GM10248 (cell line): ENCODE measurements at regions of chr7 and their contacts with region 1.

Region 1: GRCh38 chr7:6589829-6590644 is at the start of gene INTS15:
- DNase-seq: peak; percentile 92
- CTCF ChIP-seq: peak; percentile 88

Region 2: GRCh38 chr7:6074612-6075385 is 515.2 kb before region 1 on chr7:
- CTCF ChIA-PET with region 1: no interaction called
- POLR2A ChIA-PET with region 1: no interaction called
- DNase-seq: no peak
- CTCF ChIP-seq: no peak

Region 3: DNA sequence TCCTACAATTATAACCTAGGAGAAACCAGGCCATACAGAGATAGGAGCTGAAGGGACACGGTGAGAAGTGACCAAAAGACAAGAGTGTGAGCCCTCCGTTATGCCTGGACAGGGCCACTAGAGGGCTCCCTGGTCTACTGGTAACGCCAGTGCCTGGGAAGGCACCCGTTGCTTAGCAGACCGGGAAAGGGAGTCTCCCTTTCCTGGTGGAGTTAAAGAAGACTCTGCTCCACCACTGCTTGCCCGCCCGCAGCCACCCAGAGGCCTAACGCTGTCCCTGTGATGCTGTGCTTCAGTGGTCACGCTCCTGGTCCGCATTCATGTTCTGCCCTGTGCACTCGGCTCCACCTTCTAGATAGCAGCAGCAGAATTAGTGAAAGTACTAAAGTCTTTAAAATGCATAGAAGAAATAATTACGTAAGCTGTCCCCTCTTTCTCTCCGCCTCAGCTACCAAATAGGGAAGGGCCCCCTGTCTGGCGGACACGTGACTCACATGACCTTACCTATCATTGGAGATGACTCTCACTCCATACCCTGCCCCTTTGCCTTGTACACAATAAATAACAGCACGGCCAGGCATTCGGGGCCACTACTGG is 73.6 kb before region 1 on chr7:
- CTCF ChIA-PET with region 1: interaction called, 10 read pairs
- POLR2A ChIA-PET with region 1: no interaction called
- DNase-seq: no peak
- CTCF ChIP-seq: peak; percentile 89

Region 4: DNA sequence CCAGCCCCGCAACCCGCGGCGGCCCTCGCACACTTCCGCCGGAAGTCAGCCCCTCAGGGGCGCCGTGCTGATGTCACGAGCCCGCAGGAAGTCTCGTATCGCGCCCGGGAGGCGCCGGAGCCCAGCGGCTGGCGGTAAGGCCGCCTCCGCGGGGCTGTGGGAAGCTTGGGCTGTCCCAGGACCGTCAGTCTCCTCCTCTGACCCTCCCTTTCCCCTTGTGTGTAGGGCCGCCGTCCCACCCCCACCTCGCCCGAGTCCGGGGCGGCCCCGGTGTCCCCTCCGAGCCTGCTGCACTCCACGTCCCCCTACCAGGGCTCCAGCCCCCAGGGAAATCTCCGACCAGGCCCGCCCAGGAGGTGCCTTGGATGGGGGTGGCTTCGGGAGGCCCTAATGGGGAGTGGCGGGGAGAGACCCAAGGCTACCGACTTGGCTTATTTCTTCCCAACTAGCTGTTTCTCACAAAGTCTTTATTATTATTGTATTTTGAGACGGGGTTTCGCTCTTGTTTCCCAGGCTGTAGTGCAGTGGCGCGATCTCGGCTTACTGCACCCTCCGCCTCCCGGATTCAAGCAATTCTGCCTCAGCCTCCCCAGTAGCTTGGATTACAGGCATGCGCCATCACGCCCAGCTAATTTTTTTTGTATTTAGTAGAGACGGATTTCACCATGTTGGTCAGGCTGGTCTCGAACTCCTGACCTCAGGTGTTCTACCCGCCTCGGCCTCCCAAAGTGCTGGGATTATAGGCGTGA is 12.5 kb before region 1 on chr7 and contains the start of gene ZDHHC4:
- CTCF ChIA-PET with region 1: interaction called, 69 read pairs
- POLR2A ChIA-PET with region 1: no interaction called
- DNase-seq: peak; percentile 99
- CTCF ChIP-seq: peak; percentile 3

Region 5: GRCh38 chr7:6612815-6613214 is 22.8 kb after region 1 on chr7:
- CTCF ChIA-PET with region 1: interaction called, 10 read pairs
- POLR2A ChIA-PET with region 1: no interaction called
- DNase-seq: no peak
- CTCF ChIP-seq: no peak